CD4-positive, alpha-beta memory T cell (primary cell): ENCODE measurements at regions of chr6 and their contacts with region 1.

Region 1: DNA sequence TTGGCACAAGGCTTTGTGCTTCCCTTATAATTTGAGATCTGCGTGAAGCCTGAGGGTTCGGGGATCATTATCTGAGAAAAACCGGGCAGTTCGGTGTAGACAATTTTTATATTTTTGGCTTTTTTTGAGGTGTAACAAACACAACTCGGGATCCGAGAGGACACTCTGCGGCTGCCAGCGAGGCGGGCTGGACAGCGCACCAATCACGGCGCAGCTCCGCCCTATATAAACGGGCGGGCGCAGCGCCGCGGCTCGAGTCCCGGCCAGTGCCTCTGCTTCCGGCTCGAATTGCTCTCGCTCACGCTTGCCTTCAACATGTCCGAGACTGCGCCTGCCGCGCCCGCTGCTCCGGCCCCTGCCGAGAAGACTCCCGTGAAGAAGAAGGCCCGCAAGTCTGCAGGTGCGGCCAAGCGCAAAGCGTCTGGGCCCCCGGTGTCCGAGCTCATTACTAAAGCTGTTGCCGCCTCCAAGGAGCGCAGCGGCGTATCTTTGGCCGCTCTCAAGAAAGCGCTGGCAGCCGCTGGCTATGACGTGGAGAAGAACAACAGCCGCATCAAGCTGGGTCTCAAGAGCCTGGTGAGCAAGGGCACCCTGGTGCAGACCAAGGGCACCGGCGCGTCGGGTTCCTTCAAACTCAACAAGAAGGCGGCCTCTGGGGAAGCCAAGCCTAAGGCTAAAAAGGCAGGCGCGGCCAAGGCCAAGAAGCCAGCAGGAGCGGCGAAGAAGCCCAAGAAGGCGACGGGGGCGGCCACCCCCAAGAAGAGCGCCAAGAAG is 69.0 kb downstream of the HFE start:
- DNase-seq: peak; percentile 80 to 89 (median 88)
- H3K4me3 ChIP-seq: peak overlapping the region; percentile 53 to 64
- H3K4me3 Mint-ChIP-seq: peak overlapping the region; percentile 88 to 99 (median 96)
- H3K27ac ChIP-seq: peak overlapping the region; percentile 79
- H3K27ac Mint-ChIP-seq: peak overlapping the region; percentile 91 to 98 (median 95)
- H3K4me1 ChIP-seq: peaks cover 26% of the 10 kb centered on the region
- H3K4me1 Mint-ChIP-seq: peaks cover 16 to 58% (median 26%) of the 10 kb centered on the region in 4 donors
- H3K27me3 ChIP-seq: no peaks in the 10 kb centered on the region
- H3K27me3 Mint-ChIP-seq: no peaks in the 10 kb centered on the region

Region 2: GRCh38 chr6:26020329-26021000 is 135.8 kb before region 1 on chr6:
- CTCF ChIA-PET with region 1: interaction called, 3 read pairs
- POLR2A ChIA-PET with region 1: interaction called, 348 read pairs
- intact Hi-C with region 1: loop called (anchors 1 kb)
- DNase-seq: peak; percentile 85 to 92 (median 91)
- H3K4me3 ChIP-seq: peak overlapping the region; percentile 82 to 87
- H3K4me3 Mint-ChIP-seq: peak overlapping the region; percentile 92 to 98 (median 96)
- H3K27ac ChIP-seq: peak overlapping the region; percentile 96
- H3K27ac Mint-ChIP-seq: peak overlapping the region; percentile 96 to 100 (median 100)
- H3K4me1 ChIP-seq: peaks cover 29% of the 10 kb centered on the region
- H3K4me1 Mint-ChIP-seq: peaks cover 14 to 58% (median 32%) of the 10 kb centered on the region in 4 donors
- H3K27me3 ChIP-seq: no peaks in the 10 kb centered on the region
- H3K27me3 Mint-ChIP-seq: peaks cover 0 to 1% of the 10 kb centered on the region in 2 donors

Region 3: DNA sequence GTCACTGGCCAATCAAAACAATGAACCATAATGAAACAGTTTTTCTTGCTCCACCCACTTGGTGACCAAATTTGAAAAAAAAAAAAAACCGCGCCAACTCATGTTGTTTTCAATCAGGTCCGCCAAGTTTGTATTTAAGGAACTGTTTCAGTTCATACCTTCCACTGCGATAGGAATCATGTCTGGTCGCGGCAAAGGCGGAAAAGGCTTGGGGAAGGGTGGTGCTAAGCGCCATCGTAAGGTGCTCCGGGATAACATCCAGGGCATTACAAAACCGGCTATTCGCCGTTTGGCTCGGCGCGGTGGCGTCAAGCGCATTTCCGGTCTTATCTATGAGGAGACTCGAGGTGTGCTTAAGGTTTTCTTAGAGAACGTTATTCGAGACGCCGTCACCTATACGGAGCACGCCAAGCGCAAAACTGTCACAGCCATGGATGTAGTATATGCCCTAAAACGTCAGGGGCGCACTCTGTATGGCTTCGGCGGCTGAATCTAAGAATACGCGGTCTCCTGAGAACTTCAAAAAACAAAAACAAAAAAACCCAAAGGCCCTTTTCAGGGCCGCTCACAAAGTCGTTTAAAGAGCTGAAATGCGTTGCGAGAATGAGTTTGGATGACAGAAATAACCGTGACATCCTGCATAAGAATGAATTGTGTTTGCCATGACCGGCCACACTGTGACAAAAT is 52.4 kb before region 1 on chr6:
- CTCF ChIA-PET with region 1: interaction called, 6 read pairs
- POLR2A ChIA-PET with region 1: interaction called, 218 read pairs
- intact Hi-C with region 1: loop called (anchors 1 kb)
- DNase-seq: peak; percentile 93 to 96 (median 94)
- H3K4me3 ChIP-seq: peak overlapping the region; percentile 36 to 39
- H3K4me3 Mint-ChIP-seq: peak overlapping the region; percentile 84 to 96 (median 92)
- H3K27ac ChIP-seq: peak overlapping the region; percentile 66
- H3K27ac Mint-ChIP-seq: peak overlapping the region; percentile 96 to 100 (median 99)
- H3K4me1 ChIP-seq: peaks cover 17% of the 10 kb centered on the region
- H3K4me1 Mint-ChIP-seq: peaks cover 11 to 19% (median 15%) of the 10 kb centered on the region in 4 donors
- H3K27me3 ChIP-seq: no peaks in the 10 kb centered on the region
- H3K27me3 Mint-ChIP-seq: peaks cover 2 to 6% of the 10 kb centered on the region in 2 donors

Region 4: GRCh38 chr6:26196846-26197648 is 40.8 kb after region 1 on chr6:
- CTCF ChIA-PET with region 1: interaction called, 47 read pairs
- POLR2A ChIA-PET with region 1: interaction called, 2,476 read pairs
- intact Hi-C with region 1: loop called (anchors 1 kb)
- DNase-seq: peak; percentile 92 to 93 (median 92)
- H3K4me3 ChIP-seq: peak overlapping the region; percentile 83 to 97
- H3K4me3 Mint-ChIP-seq: peak overlapping the region; percentile 94 to 99 (median 97)
- H3K27ac ChIP-seq: peak overlapping the region; percentile 84
- H3K27ac Mint-ChIP-seq: peak overlapping the region; percentile 96 to 100 (median 98)
- H3K4me1 ChIP-seq: peaks cover 43% of the 10 kb centered on the region
- H3K4me1 Mint-ChIP-seq: peaks cover 23 to 57% (median 41%) of the 10 kb centered on the region in 4 donors
- H3K27me3 ChIP-seq: no peaks in the 10 kb centered on the region
- H3K27me3 Mint-ChIP-seq: no peaks in the 10 kb centered on the region

Region 5: GRCh38 chr6:26249957-26250697 is 93.9 kb after region 1 on chr6:
- CTCF ChIA-PET with region 1: interaction called, 10 read pairs
- POLR2A ChIA-PET with region 1: no interaction called
- intact Hi-C with region 1: no loop called
- DNase-seq: peak; percentile 79 to 88 (median 83)
- H3K4me3 ChIP-seq: peak overlapping the region; percentile 86 to 88
- H3K4me3 Mint-ChIP-seq: peak overlapping the region; percentile 92 to 99 (median 98)
- H3K27ac ChIP-seq: peak overlapping the region; percentile 59
- H3K27ac Mint-ChIP-seq: peak overlapping the region; percentile 85 to 97 (median 94)
- H3K4me1 ChIP-seq: peaks cover 25% of the 10 kb centered on the region
- H3K4me1 Mint-ChIP-seq: peaks cover 28 to 53% (median 40%) of the 10 kb centered on the region in 4 donors
- H3K27me3 ChIP-seq: no peaks in the 10 kb centered on the region
- H3K27me3 Mint-ChIP-seq: no peaks in the 10 kb centered on the region

Region 6: DNA sequence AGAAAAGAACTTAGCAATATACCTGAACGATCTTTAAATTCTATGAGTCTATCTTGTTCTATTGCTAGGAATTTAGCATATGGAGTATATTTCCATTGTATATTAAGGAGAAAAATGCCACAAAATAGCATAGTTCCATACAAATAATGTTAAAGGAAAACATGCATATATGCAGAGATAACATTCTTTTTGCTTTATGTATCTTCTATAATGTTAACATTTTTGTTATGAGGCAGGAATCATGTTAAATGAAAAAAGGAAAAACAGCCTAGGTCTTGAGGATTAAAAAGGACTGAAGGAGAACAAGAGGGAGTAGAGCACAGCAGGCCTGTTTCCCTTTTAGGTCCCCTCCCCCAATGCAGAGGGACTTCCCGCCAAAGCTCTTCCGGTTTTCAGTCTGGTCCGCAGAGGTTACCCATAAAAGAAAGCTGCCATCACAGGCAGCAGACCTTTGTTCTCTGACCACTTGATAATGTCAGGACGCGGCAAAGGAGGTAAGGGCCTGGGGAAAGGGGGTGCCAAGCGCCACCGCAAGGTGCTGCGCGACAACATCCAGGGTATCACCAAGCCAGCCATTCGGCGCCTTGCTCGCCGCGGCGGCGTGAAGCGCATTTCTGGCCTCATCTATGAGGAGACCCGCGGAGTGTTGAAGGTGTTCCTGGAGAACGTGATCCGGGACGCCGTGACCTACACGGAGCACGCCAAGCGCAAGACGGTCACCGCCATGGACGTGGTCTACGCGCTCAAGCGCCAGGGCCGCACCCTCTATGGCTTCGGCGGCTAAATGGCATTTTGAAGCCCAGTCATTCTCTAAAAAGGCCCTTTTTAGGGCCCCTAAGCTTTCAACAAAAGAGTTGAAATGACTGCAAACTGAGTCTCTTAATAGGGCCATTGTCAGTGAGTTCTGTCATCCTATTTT is 982.8 kb after region 1 on chr6:
- CTCF ChIA-PET with region 1: no interaction called
- POLR2A ChIA-PET with region 1: interaction called, 99 read pairs
- intact Hi-C with region 1: no loop called
- DNase-seq: peak; percentile 64 to 79 (median 69)
- H3K4me3 ChIP-seq: peak overlapping the region; percentile 58 to 73
- H3K4me3 Mint-ChIP-seq: peak overlapping the region; percentile 93 to 98 (median 96)
- H3K27ac ChIP-seq: peak overlapping the region; percentile 94
- H3K27ac Mint-ChIP-seq: peak overlapping the region; percentile 98 to 99 (median 99)
- H3K4me1 ChIP-seq: peaks cover 45% of the 10 kb centered on the region
- H3K4me1 Mint-ChIP-seq: peaks cover 30 to 66% (median 40%) of the 10 kb centered on the region in 4 donors
- H3K27me3 ChIP-seq: no peaks in the 10 kb centered on the region
- H3K27me3 Mint-ChIP-seq: no peaks in the 10 kb centered on the region

Region 7: DNA sequence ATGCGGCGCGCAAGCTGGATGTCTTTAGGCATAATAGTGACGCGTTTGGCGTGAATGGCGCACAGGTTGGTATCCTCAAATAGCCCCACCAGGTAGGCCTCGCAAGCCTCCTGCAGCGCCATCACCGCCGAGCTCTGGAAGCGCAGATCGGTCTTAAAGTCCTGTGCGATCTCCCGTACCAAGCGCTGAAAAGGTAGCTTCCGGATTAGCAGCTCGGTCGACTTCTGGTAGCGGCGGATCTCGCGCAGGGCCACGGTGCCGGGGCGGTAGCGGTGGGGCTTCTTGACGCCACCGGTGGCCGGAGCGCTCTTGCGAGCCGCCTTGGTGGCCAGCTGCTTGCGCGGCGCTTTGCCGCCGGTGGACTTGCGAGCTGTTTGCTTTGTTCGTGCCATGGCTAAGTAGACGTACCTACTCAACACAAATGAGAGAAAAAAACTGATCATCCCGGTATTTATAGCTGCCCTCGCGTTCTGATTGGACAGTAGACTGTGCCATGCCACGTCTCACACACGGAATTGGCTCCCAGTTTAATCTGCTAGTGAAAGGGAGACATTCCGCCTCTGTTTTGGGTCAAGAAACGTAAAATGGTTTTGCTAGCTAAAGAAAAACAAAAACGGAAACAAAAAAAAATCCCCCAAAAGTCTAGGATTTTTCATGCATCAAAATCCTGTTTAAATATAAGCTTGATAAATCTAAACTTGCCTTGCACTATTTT is 1715.8 kb after region 1 on chr6:
- CTCF ChIA-PET with region 1: no interaction called
- POLR2A ChIA-PET with region 1: interaction called, 66 read pairs
- intact Hi-C with region 1: no loop called
- DNase-seq: peak; percentile 91 to 96 (median 94)
- H3K4me3 ChIP-seq: peak overlapping the region; percentile 77 to 89
- H3K4me3 Mint-ChIP-seq: peak overlapping the region; percentile 87 to 94 (median 90)
- H3K27ac ChIP-seq: peak overlapping the region; percentile 86
- H3K27ac Mint-ChIP-seq: peak overlapping the region; percentile 89 to 97 (median 94)
- H3K4me1 ChIP-seq: peaks cover 33% of the 10 kb centered on the region
- H3K4me1 Mint-ChIP-seq: peaks cover 24 to 48% (median 33%) of the 10 kb centered on the region in 4 donors
- H3K27me3 ChIP-seq: no peaks in the 10 kb centered on the region
- H3K27me3 Mint-ChIP-seq: no peaks in the 10 kb centered on the region